ENCODE measurements at regions of chr16 and their contacts with region 1.

Region 1: GRCh38 chr16:711548-712320 is 3.2 kb upstream of the METRN start:
- DNase-seq: no peak
- H3K4me3 ChIP-seq: no peak overlapping the region
- H3K27ac ChIP-seq: no peak overlapping the region
- H3K4me1 ChIP-seq: peaks cover 20 to 56% (median 45%) of the 10 kb centered on the region in 4 donors
- H3K27me3 ChIP-seq: peaks cover 0 to 65% (median 45%) of the 10 kb centered on the region in 4 donors
- CTCF ChIP-seq: peak; percentile 93 to 96 (median 94)
- EP300 ChIP-seq: no peak
- POLR2A ChIP-seq: no peak

Region 2: DNA sequence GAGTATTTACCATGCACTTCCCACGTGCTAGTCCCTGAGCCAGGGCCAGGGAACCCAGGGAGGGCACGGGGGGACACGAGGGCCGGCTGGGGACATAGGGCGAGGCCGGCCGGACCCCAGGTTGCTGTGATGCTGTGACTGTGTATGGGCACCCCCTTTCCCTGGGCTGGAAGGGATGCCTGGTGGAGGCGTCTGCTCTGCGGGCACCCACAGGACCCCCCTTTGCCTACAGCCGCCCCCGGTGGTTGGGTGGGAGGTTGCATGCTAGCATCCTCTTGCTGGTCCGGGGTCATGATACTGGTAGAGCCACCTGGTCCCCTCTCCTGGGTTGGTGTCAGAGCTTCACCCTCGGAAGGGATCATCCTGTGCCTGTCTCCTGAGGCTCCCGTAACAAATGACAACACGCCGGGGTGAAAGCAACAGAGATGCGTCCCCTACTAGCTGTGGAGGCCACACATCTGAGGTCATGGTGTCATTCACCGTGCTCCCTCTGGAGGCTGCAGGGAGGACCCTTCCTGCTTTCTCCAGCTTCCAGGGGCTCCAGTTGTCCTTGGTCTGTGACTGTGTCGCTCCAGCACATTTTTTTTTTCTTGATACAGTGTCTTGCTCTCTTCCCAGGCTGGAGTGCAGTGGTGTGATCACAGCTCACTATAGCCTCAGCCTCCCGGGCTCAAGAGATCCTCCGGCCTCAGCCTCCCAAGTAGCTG is 32.2 kb after region 1 on chr16:
- intact Hi-C with region 1: loop called (anchors 2 kb)
- DNase-seq: no peak
- H3K4me3 ChIP-seq: no peak overlapping the region
- H3K27ac ChIP-seq: no peak overlapping the region
- H3K4me1 ChIP-seq: peaks cover 14 to 21% (median 18%) of the 10 kb centered on the region in 4 donors
- H3K27me3 ChIP-seq: peaks cover 0 to 34% (median 0%) of the 10 kb centered on the region in 4 donors
- CTCF ChIP-seq: no peak
- EP300 ChIP-seq: no peak
- POLR2A ChIP-seq: no peak

Region 3: GRCh38 chr16:785563-786535 is 74.1 kb after region 1 on chr16:
- intact Hi-C with region 1: loop called (anchors 1 kb)
- DNase-seq: no peak
- H3K4me3 ChIP-seq: no peak overlapping the region
- H3K27ac ChIP-seq: no peak overlapping the region
- H3K4me1 ChIP-seq: peaks cover 23 to 51% (median 37%) of the 10 kb centered on the region in 4 donors
- H3K27me3 ChIP-seq: peaks cover 0 to 31% (median 9%) of the 10 kb centered on the region in 4 donors
- CTCF ChIP-seq: peak; percentile 44 to 69 (median 46)
- EP300 ChIP-seq: no peak
- POLR2A ChIP-seq: no peak